Panc1 (cell line): ENCODE measurements at regions of chr11 and their contacts with region 1.

Region 1: GRCh38 chr11:9861860-9862725 is 198.2 kb downstream of the SWAP70 start:
- DNase-seq: peak; percentile 74
- ATAC-seq: peak; percentile 91
- H3K4me3 ChIP-seq: no peak overlapping the region
- H3K27ac ChIP-seq: peak overlapping the region; percentile 96
- H3K4me1 ChIP-seq: peaks cover 56% of the 10 kb centered on the region
- H3K27me3 ChIP-seq: no peaks in the 10 kb centered on the region
- CTCF ChIP-seq: peak; percentile 97

Region 2: GRCh38 chr11:9906043-9906791 is 44.1 kb after region 1 on chr11:
- CTCF ChIA-PET with region 1: interaction called, 3 read pairs
- POLR2A ChIA-PET with region 1: no interaction called
- in situ Hi-C with region 1: no loop called
- intact Hi-C with region 1: loop called (anchors 2 kb)
- DNase-seq: peak; percentile 81
- ATAC-seq: peak; percentile 97
- H3K4me3 ChIP-seq: no peak overlapping the region; a peak in 1 of 4 replicates
- H3K27ac ChIP-seq: peak overlapping the region; percentile 100
- H3K4me1 ChIP-seq: peaks cover 29% of the 10 kb centered on the region
- H3K27me3 ChIP-seq: no peaks in the 10 kb centered on the region
- CTCF ChIP-seq: no peak

Region 3: GRCh38 chr11:9972989-9973388 is 110.9 kb after region 1 on chr11:
- CTCF ChIA-PET with region 1: interaction called, 4 read pairs
- POLR2A ChIA-PET with region 1: no interaction called
- in situ Hi-C with region 1: no loop called
- intact Hi-C with region 1: loop called (anchors 2 kb)
- DNase-seq: peak; percentile 53
- ATAC-seq: peak; percentile 72
- H3K4me3 ChIP-seq: no peak overlapping the region
- H3K27ac ChIP-seq: peak overlapping the region; percentile 76
- H3K4me1 ChIP-seq: 0 out of 2 replicates have a peak, but pooled peaks cover 3% of the 10 kb centered on the region
- H3K27me3 ChIP-seq: no peaks in the 10 kb centered on the region
- CTCF ChIP-seq: peak; percentile 85; the same call in 1 of the 2 replicates